ENCODE measurements at regions of chr14 and their contacts with region 1.

Region 1: DNA sequence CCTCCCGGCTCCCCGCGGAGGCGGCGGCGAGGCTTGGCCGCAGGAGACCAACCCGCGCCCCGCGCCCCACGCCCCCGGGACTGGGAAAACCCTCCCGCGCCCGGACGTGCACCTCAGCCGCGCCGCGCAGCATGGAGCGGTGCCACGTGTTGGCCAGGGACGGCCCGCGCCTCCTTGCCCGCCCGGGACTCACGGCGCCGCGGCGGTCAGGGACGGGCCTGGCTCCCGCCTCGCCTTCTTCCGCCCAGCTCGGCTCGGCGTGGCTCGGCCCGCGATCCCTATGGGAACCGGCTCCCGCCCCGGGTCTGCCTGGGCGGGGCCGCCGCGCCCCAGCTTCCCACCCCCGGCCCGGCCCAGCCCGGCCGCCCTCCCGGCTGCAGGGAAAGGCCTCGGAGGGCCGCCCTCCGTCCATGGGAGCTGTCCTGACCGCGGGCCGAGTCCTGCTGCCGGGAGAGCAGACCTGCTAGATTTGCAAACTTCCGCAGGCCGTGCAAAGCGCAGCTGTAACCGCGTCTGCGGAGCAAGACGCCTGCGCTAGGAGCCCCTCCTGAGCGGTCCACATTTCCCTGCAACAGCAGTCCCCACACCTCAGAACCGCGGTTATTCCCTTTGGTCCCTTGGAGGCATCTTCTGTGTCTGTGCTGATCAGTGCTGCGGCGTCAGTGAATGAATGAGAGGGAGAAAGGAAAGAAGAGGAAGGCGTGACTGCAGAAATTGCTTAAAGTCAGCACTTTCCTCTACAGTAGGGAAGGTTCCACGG is at the start of gene CDKL1:
- DNase-seq: peak in 12 of 14 experiments; percentile 3 to 62 (median 24)
- ATAC-seq: peak; percentile 54
- H3K4me3 ChIP-seq: peak within 1 kb of the TSS; percentile 62
- H3K4me3 Mint-ChIP-seq: peak within 1 kb of the TSS; percentile 89
- H3K27ac ChIP-seq: no peak within 1 kb of the TSS
- H3K27ac Mint-ChIP-seq: no peak within 1 kb of the TSS
- H3K4me1 ChIP-seq: peaks cover 12% of the 10 kb centered on the region
- H3K4me1 Mint-ChIP-seq: peaks cover 12% of the 10 kb centered on the region
- H3K27me3 ChIP-seq: no peaks in the 10 kb centered on the region
- H3K27me3 Mint-ChIP-seq: peaks cover 4% of the 10 kb centered on the region
- CTCF ChIP-seq: no peak
- total RNA-seq, gene CDKL1: 2.4 to 2.8 TPM

Region 2: DNA sequence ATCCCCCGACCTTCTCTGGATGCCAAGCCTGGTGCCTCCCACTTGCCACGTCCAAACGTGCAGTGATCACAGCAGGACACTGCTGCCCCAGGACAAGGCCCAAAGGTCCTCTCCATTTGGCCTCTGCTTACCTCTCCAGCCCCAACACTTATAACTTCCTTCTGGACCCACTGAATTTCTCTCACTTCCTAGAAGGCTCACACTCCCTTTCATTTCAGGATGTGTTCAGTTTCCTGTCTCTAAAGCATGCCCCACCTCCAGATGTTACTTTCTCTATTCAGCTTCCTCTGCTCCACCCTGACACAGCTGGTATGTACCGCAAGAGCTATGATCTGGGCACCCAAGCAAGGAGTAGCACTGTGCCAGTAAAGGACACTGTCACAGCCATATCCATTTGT is 33.1 kb before region 1 on chr14:
- CTCF ChIA-PET with region 1: interaction called, 3 read pairs
- POLR2A ChIA-PET with region 1: interaction called, 9 read pairs
- intact Hi-C with region 1: loop called in 1 of 2 experiments (anchors 5 kb)
- DNase-seq: peak in 12 of 14 experiments; percentile 12 to 91 (median 44)
- ATAC-seq: peak; percentile 96
- H3K4me3 ChIP-seq: peak overlapping the region; percentile 66
- H3K4me3 Mint-ChIP-seq: peak overlapping the region; percentile 88
- H3K27ac ChIP-seq: peak overlapping the region; percentile 67 to 91
- H3K27ac Mint-ChIP-seq: peak overlapping the region; percentile 86
- H3K4me1 ChIP-seq: peaks cover 25% of the 10 kb centered on the region
- H3K4me1 Mint-ChIP-seq: peaks cover 45% of the 10 kb centered on the region
- H3K27me3 ChIP-seq: no peaks in the 10 kb centered on the region
- H3K27me3 Mint-ChIP-seq: no peaks in the 10 kb centered on the region
- CTCF ChIP-seq: no peak